Esophagus squamous epithelium (tissue), 5 donors: ENCODE measurements at regions of chrX and their contacts with region 1.

Region 1: DNA sequence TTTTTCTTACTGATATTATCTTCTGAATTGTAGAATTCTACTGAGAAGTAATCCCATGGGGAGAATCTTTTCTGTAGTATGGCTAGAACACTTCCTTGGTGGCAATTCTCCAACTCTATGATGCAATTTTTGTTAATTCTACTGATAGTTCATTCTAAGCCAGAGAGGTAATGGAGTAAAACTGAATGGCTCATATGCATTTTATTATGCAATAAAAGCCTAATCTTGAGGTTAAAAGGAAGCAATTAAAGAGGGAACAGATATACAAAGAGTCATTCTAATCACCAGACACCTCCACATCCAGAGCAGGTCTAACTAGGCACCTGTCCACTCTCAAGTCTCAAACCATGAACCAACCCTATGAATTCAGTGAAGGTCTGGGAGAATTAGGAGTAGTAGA is 9.7 kb downstream of the RAP2C start:
- DNase-seq: no peak
- H3K4me3 ChIP-seq: no peak overlapping the region
- H3K27ac ChIP-seq: no peak overlapping the region
- H3K4me1 ChIP-seq: peaks cover 0 to 38% (median 0%) of the 10 kb centered on the region in 3 donors
- H3K27me3 ChIP-seq: peaks cover 0 to 3% (median 0%) of the 10 kb centered on the region in 4 donors
- CTCF ChIP-seq: no peak
- POLR2A ChIP-seq: no peak

Region 2: GRCh38 chrX:131778269-131779218 is 431.0 kb before region 1 on chrX:
- intact Hi-C with region 1: no loop called
- DNase-seq: peak; percentile 7
- H3K4me3 ChIP-seq: peak overlapping the region in 2 of 4 donors; percentile 55 to 69
- H3K27ac ChIP-seq: peak overlapping the region in 2 of 4 donors; percentile 85 to 86
- H3K4me1 ChIP-seq: peaks cover 0 to 5% (median 0%) of the 10 kb centered on the region in 3 donors
- H3K27me3 ChIP-seq: no peaks in the 10 kb centered on the region
- CTCF ChIP-seq: peak in 3 of 6 experiments; percentile 49 to 57 (median 50)
- POLR2A ChIP-seq: no peak

Region 3: DNA sequence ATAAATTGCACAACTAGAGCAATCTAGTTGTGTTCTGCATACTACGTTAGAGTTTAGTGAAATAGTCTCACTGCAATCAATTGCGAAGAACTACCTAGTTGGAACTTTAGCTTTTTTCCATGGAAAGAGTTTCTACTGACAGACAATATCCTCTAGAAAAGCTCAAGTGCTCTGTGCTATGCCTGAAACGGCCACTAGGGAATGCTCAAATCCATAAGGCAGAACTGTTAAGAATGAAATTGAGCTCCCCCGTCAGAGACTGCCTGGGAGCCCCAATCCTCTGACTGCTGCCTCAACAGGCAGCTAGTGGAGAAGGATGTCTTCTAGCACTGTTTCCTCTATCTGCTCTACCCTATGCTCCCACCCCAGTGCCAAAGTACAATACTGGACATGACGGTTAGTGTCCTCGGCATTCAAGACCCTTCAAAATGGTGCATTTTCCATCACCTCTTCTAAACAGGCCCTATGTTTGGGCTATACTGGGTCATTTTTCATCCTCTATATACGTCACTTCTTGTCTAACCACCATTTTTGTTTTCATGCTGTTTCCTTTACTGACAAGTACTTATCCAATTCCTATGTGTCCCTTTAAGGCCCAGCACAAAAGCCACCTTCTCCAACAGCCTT is 117.0 kb before region 1 on chrX:
- intact Hi-C with region 1: loop called (anchors 10 kb)
- DNase-seq: no peak
- H3K4me3 ChIP-seq: no peak overlapping the region
- H3K27ac ChIP-seq: no peak overlapping the region
- H3K4me1 ChIP-seq: no peaks in the 10 kb centered on the region
- H3K27me3 ChIP-seq: peaks cover 0 to 3% (median 0%) of the 10 kb centered on the region in 4 donors
- CTCF ChIP-seq: peak; percentile 20 to 82 (median 68)
- POLR2A ChIP-seq: no peak